PC-3 (cell line): ENCODE measurements at regions of chr9 and their contacts with region 1.

Region 1: GRCh38 chr9:129610473-129611301 is 10.2 kb downstream of the C9orf50 start:
- DNase-seq: peak; percentile 67
- ATAC-seq: peak; percentile 45
- H3K4me3 ChIP-seq: peak overlapping the region; percentile 75
- H3K27ac ChIP-seq: no peak overlapping the region
- H3K4me1 ChIP-seq: peaks cover 8% of the 10 kb centered on the region; the same call in 1 of the 2 replicates
- H3K27me3 ChIP-seq: no peaks in the 10 kb centered on the region
- CTCF ChIP-seq: peak; percentile 72

Region 2: DNA sequence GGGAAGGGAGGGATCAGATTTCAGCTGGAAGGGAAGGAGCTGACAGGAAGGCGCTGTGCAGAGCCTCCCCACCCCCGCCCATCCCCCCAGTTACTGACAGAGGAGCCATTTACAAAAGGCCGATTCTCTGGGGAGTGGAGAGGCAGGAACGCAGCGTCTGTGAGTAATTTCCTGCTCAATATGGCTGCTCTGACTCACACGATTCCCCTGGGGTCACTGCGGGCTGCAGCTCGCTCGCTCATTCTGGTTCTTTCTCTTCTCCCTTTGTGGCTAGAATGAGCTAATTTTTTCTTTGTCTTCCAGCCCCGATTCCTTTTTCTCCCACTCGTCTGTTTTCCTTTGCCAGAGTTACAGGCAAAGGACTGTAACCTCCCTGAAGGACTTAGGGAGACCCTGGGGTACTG is 470.7 kb before region 1 on chr9:
- CTCF ChIA-PET with region 1: interaction called, 9 read pairs
- POLR2A ChIA-PET with region 1: no interaction called
- intact Hi-C with region 1: loop called (anchors 5 kb)
- DNase-seq: peak; percentile 95
- ATAC-seq: peak; percentile 74
- H3K4me3 ChIP-seq: peak overlapping the region; percentile 60
- H3K27ac ChIP-seq: peak overlapping the region; percentile 100
- H3K4me1 ChIP-seq: peaks cover 30% of the 10 kb centered on the region
- H3K27me3 ChIP-seq: no peaks in the 10 kb centered on the region
- CTCF ChIP-seq: no peak

Region 3: DNA sequence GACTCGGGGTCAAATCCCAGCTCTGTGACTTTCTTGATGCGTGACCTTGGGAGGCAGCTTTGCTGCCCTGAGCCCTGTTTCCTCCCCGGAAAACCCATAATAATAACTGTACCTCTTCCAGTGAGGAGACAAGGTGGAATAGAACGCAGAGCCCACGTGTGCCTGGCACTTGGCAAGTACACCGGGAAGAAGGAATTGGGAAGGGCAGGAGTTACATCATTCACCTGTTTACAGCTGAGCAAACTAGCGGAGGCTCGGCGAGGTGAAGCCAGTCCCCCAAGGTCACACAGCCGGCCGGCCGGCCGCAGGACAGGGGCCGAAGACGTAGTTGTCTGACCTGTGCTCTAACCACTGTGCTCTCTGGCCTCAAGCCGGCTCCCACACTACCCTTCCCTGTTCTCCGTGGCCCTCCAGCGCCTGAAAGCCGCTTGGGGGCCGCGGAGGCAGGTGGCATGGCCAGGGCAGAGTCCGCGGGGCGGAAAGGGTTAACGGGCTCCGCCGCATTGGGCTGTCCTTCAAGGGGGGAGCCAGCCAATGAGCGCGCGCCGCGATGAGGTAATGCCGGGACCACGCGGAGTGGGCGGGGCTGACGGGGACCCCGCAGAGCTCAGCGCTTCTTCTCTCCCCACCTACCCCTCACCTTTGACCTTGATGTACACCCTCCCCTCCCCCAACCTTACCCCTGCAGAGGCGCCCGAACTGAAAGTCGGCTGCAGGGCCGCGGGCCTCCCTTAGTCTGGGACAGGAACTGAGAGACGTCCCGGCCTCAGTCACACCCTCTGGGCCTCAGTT is 115.0 kb before region 1 on chr9:
- CTCF ChIA-PET with region 1: no interaction called
- POLR2A ChIA-PET with region 1: no interaction called
- intact Hi-C with region 1: loop called (anchors 5 kb)
- DNase-seq: peak; percentile 75
- ATAC-seq: peak; percentile 68
- H3K4me3 ChIP-seq: peak overlapping the region; percentile 70
- H3K27ac ChIP-seq: peak overlapping the region; percentile 62
- H3K4me1 ChIP-seq: peaks cover 25% of the 10 kb centered on the region
- H3K27me3 ChIP-seq: no peaks in the 10 kb centered on the region
- CTCF ChIP-seq: no peak